ENCODE measurements at regions of chr18 and their contacts with region 1.

Region 1: DNA sequence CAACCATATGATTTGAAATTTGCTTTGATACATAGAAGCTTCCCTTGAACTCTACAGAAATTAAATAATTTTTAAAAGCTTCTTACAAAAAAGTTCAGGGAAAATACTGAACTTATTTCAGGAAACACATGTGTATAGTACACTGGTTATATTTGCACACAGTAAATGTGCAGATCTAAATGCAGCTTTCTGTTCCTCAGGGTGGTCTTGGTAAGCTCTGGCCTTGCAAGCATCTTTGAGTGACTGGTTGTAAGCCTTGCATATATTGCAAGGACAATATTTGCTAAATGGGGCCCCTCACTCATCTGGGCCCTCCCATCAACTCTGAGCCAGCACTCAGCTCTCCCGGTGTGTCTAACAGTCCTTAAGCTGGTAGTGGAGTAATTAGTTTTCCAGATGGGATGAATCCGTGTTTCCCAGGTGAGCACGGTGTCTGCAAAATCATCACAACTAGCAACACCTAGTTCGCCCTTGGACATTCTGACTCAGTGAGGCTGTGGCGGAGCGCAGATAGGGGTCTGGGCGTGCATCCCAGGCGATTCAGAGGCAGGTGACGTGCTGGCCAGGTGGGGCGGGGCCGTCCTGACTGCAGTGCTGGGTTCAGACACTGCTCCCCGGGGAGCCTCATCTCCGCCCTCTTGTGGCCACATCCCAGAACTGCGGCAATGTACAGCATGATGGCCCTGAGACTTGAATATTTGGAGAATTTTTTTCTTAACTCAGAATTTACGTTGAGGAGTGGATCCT is 149.6 kb downstream of the MBP start:
- DNase-seq: peak; percentile 94
- H3K4me3 Mint-ChIP-seq: no peak overlapping the region
- H3K27ac Mint-ChIP-seq: no peak overlapping the region
- H3K4me1 Mint-ChIP-seq: peaks cover 4% of the 10 kb centered on the region
- H3K27me3 Mint-ChIP-seq: no peaks in the 10 kb centered on the region

Region 2: GRCh38 chr18:76875390-76876325 is 107.4 kb before region 1 on chr18:
- CTCF ChIA-PET with region 1: interaction called, 11 read pairs
- POLR2A ChIA-PET with region 1: no interaction called
- intact Hi-C with region 1: loop called (anchors 1 kb)
- DNase-seq: peak; percentile 58
- H3K4me3 Mint-ChIP-seq: no peak overlapping the region
- H3K27ac Mint-ChIP-seq: peak overlapping the region; percentile 83
- H3K4me1 Mint-ChIP-seq: peaks cover 15% of the 10 kb centered on the region
- H3K27me3 Mint-ChIP-seq: no peaks in the 10 kb centered on the region

Region 3: GRCh38 chr18:76922107-76922506 is 60.9 kb before region 1 on chr18:
- CTCF ChIA-PET with region 1: interaction called, 24 read pairs
- POLR2A ChIA-PET with region 1: no interaction called
- intact Hi-C with region 1: loop called (anchors 1 kb)
- DNase-seq: peak; percentile 60
- H3K4me3 Mint-ChIP-seq: no peak overlapping the region
- H3K27ac Mint-ChIP-seq: no peak overlapping the region
- H3K4me1 Mint-ChIP-seq: peaks cover 12% of the 10 kb centered on the region
- H3K27me3 Mint-ChIP-seq: no peaks in the 10 kb centered on the region

Region 4: GRCh38 chr18:76994086-76994654 is 11.2 kb after region 1 on chr18:
- CTCF ChIA-PET with region 1: interaction called, 27 read pairs
- POLR2A ChIA-PET with region 1: no interaction called
- intact Hi-C with region 1: no loop called
- DNase-seq: no peak
- H3K4me3 Mint-ChIP-seq: no peak overlapping the region
- H3K27ac Mint-ChIP-seq: no peak overlapping the region
- H3K4me1 Mint-ChIP-seq: no peaks in the 10 kb centered on the region
- H3K27me3 Mint-ChIP-seq: no peaks in the 10 kb centered on the region

Region 5: DNA sequence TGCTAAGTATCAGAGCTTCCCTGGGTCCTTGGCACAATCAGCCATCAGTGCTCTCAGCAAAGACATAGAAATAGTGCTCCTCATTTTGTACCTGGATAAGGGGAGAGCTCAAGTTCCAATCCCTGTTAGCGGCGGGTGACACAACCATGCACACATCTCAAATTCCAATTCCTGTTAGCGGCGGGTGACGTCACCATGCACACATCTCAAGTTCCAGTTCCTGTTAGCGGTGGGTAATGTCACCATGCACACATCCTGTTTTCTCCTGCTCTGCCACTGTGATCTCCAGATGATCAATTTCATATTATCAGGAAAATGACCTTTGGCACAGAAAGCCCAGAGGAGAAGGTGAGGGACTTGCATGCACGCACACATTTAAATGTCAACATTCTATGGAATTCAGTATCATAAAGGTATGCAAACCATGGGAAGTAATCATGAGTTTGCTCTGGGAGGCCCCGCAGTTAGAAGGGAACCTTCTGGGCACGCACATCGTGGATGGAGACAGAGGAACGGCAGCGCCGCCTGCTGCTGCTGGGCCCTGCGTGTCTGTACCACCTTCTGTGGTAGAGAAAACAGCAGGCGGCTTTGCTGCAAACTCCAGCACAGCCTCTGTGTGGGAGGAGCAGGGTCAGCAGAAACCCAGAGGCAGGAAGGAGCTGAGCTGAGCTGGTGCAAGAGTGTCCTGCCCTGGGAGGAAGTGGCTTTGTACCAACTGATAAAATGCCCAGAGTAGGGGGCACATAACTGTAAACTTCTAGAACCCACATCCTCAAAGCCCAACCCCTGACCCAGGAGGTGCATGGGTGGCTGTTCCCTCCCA is 71.8 kb after region 1 on chr18:
- CTCF ChIA-PET with region 1: interaction called, 20 read pairs
- POLR2A ChIA-PET with region 1: no interaction called
- intact Hi-C with region 1: no loop called
- DNase-seq: peak; percentile 90
- H3K4me3 Mint-ChIP-seq: peak overlapping the region; percentile 81
- H3K27ac Mint-ChIP-seq: peak overlapping the region; percentile 96
- H3K4me1 Mint-ChIP-seq: peaks cover 72% of the 10 kb centered on the region
- H3K27me3 Mint-ChIP-seq: no peaks in the 10 kb centered on the region

Region 6: GRCh38 chr18:77650799-77651385 is 667.9 kb after region 1 on chr18:
- CTCF ChIA-PET with region 1: interaction called, 10 read pairs
- POLR2A ChIA-PET with region 1: no interaction called
- intact Hi-C with region 1: no loop called
- DNase-seq: peak; percentile 75
- H3K4me3 Mint-ChIP-seq: no peak overlapping the region
- H3K27ac Mint-ChIP-seq: no peak overlapping the region
- H3K4me1 Mint-ChIP-seq: no peaks in the 10 kb centered on the region
- H3K27me3 Mint-ChIP-seq: peaks cover 9% of the 10 kb centered on the region